Activated naive CD4-positive, alpha-beta T cell treated with anti-CD3 and anti-CD28 coated beads for 36 hours (primary cell): ENCODE measurements at regions of chr3 and their contacts with region 1.

Region 1: DNA sequence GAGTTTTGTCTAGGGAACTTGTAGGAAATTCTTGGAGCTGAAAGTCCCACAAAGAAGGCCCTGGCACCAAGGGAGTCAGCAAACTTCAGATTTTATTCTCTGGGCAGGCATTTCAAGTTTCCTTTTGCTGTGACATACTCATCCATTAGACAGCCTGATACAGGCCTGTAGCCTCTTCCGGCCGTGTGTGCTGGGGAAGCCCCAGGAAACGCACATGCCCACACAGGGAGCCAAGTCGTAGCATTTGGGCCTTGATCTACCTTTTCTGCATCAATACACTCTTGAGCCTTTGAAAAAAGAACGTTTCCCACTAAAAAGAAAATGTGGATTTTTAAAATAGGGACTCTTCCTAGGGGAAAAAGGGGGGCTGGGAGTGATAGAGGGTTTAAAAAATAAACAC is 15.0 kb downstream of the TIGIT start:
- DNase-seq: peak; percentile 57
- H3K4me3 Mint-ChIP-seq: peak overlapping the region; percentile 47
- H3K27ac Mint-ChIP-seq: peak overlapping the region; percentile 89
- H3K4me1 Mint-ChIP-seq: peaks cover 40% of the 10 kb centered on the region
- H3K27me3 Mint-ChIP-seq: no peaks in the 10 kb centered on the region

Region 2: DNA sequence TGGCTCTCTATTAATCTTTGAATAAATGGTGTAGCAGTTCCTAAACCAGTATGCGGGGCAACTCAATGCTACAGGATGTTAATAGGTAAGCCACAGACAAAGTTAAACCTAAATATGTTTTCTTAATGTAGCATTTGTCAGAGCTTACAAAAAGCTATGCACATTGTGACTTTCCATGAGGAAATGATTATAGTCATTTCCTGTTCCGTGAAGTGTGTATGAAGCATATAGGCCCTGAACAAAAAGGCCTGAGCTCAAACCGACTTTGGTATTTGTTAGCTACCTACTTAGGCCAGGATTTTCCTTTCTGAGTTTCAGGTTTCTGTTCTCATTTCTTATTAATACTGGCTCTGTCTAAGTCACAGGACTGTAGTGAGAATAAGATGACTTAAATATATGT is 85.7 kb before region 1 on chr3:
- CTCF ChIA-PET with region 1: no interaction called
- intact Hi-C with region 1: loop called (anchors 1 kb)
- DNase-seq: peak; percentile 38
- H3K4me3 Mint-ChIP-seq: no peak overlapping the region
- H3K27ac Mint-ChIP-seq: peak overlapping the region; percentile 84
- H3K4me1 Mint-ChIP-seq: peaks cover 80% of the 10 kb centered on the region
- H3K27me3 Mint-ChIP-seq: no peaks in the 10 kb centered on the region

Region 3: DNA sequence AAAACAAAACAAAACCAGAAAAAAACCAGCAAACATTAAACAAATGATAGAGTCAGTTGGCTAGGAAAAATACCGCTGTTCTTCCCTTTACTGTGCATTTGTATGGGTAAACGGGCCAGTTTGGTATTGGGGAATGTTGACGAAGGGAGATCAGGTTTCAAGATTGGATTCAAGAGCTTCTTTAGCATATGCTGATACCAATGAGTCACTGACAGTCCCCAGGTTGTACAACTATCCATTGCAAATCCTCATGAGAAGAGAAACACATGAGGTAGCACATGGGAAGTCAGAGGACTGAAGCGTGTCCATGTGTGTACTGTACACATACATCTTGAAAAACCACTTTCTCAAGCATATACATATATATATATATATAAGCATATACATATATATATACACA is 10.6 kb after region 1 on chr3:
- CTCF ChIA-PET with region 1: no interaction called
- intact Hi-C with region 1: loop called (anchors 1 kb)
- DNase-seq: no peak
- H3K4me3 Mint-ChIP-seq: no peak overlapping the region
- H3K27ac Mint-ChIP-seq: no peak overlapping the region
- H3K4me1 Mint-ChIP-seq: peaks cover 36% of the 10 kb centered on the region
- H3K27me3 Mint-ChIP-seq: no peaks in the 10 kb centered on the region

Region 4: GRCh38 chr3:114336122-114336697 is 27.4 kb after region 1 on chr3:
- CTCF ChIA-PET with region 1: interaction called, 4 read pairs
- intact Hi-C with region 1: loop called (anchors 1 kb)
- DNase-seq: no peak
- H3K4me3 Mint-ChIP-seq: no peak overlapping the region
- H3K27ac Mint-ChIP-seq: no peak overlapping the region
- H3K4me1 Mint-ChIP-seq: peaks cover 18% of the 10 kb centered on the region
- H3K27me3 Mint-ChIP-seq: no peaks in the 10 kb centered on the region